ENCODE measurements at regions of chr4 and their contacts with region 1.

Region 1: GRCh38 chr4:113766882-113767281 is 5.3 kb upstream of the CAMK2D start:
- DNase-seq: no peak
- H3K4me3 ChIP-seq: no peak overlapping the region
- CTCF ChIP-seq: no peak

Region 2: GRCh38 chr4:113781439-113782040 is 14.7 kb after region 1 on chr4:
- CTCF ChIA-PET with region 1: interaction called, 11 read pairs
- POLR2A ChIA-PET with region 1: no interaction called
- DNase-seq: no peak
- H3K4me3 ChIP-seq: no peak overlapping the region
- CTCF ChIP-seq: peak; percentile 42

Measured in AG04449 (cell line).